ENCODE measurements at regions of chr6 and their contacts with region 1.

Region 1: GRCh38 chr6:85482905-85483700 is 33.2 kb downstream of the NT5E start:
- DNase-seq: peak; percentile 87
- H3K4me3 Mint-ChIP-seq: no peak overlapping the region
- H3K27ac Mint-ChIP-seq: no peak overlapping the region
- H3K4me1 Mint-ChIP-seq: peaks cover 20% of the 10 kb centered on the region
- H3K27me3 Mint-ChIP-seq: no peaks in the 10 kb centered on the region
- CTCF ChIP-seq: peak; percentile 94

Region 2: DNA sequence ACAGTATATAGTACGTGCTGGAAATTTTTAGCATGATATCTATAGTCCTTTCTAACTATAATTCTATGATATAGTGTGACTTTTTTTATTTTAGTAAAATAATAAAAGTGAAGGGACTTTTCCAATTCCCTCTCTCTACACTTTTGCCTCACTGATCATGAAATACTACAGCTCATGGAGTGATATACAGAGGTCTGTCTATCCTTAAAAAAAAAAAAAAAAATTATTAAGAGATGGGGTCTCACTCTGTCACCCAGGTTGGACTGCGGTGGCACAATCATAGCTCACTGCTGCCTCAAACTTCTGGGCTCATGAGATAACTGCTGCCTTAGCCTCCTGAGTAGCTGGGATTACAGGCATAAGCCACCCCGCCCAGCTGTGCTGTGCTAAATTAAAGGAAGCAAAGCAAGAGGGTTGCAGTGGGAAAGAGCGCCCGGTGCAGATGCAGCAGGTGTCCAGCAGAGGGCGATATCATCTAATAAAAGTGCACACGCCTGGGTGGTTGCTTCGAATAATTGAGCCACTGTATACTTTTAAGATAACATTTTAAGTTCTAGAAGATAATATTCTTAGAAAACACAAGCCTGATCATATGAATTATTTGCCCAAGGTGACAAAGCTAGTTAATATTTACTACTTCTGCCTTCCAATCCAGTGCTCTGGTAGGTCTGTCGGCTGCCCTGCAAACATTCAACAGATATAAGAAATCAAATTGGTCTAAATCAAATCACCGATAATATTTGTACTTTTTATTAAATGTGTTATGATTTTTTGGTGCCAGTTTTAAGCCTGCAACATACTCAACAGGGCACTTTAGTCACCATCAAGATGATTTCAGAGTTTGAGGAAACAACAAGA is 128.1 kb before region 1 on chr6:
- CTCF ChIA-PET with region 1: interaction called, 23 read pairs
- intact Hi-C with region 1: loop called (anchors 1 kb)
- DNase-seq: peak; percentile 79
- H3K4me3 Mint-ChIP-seq: no peak overlapping the region
- H3K27ac Mint-ChIP-seq: no peak overlapping the region
- H3K4me1 Mint-ChIP-seq: peaks cover 18% of the 10 kb centered on the region
- H3K27me3 Mint-ChIP-seq: no peaks in the 10 kb centered on the region
- CTCF ChIP-seq: peak; percentile 89

Region 3: DNA sequence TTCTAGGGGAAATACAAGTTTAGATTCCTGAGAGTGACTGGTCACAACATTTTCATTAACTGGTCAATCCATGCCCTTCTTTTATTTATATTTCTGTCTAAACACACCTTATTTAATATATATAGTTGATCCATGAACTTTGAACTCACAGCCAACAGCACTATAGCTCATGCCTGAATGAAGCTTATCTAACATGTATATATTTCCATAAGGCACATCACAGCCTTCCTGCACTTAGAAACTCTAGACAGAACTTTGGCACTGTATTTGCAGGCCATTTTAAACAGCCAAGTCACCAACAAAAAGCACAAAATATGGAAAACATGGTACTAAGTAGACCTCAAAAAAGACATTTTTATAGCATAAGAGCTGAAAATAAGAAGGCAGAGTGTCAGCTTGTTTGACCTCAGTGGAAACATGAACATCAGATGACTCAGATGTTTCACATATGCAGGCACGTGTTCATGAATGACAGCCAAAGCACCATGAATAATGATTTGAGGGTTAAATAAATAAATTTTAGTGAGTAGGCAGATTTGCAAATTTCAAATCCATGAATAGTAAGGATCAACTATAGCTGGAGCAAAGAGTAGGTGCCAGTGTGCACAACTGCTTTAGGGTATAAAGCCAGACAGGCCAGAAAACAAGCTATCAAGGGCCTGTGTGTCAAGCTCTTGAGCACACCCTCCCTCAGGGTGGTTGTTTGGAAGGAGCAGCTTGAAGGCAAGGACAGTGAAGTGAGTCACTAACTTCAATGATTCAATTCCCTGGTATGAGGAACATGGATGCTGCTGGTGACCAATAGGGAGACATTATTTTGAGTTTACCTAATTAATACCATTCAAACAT is 122.1 kb before region 1 on chr6:
- CTCF ChIA-PET with region 1: interaction called, 23 read pairs
- intact Hi-C with region 1: no loop called
- DNase-seq: peak; percentile 72
- H3K4me3 Mint-ChIP-seq: no peak overlapping the region
- H3K27ac Mint-ChIP-seq: peak overlapping the region; percentile 89
- H3K4me1 Mint-ChIP-seq: peaks cover 47% of the 10 kb centered on the region
- H3K27me3 Mint-ChIP-seq: no peaks in the 10 kb centered on the region
- CTCF ChIP-seq: no peak

Region 4: DNA sequence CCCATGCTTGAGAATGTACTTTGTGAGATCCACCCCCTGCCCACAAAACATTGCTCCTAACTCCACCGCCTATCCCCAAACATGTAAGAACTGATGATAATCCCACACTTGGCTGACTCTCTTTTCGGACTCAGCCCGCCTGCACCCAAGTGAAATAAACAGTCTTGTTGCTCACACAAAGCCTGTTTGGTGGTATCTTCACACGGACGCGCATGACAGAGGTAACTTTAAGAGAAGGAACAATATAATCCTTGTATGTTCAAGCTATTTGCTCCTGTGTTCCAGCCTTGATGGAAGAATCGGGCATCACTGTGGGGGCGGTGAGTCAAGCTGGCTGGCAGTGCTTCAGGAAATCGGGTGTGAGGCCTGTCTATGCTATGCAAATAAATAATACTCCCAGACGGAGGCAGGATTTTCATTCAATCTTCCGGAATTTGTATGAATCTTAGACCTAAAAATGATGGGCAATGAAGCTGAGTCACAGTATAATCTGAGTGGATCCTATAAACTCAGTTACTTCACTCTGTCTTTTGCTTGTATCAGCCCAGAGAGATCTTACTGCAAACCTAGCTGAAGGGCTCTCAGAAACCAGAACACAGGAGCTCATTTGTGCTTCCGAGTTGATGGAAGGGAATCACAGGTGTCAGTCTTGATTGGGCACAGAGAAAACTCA is 78.5 kb before region 1 on chr6:
- CTCF ChIA-PET with region 1: interaction called, 12 read pairs
- intact Hi-C with region 1: loop called (anchors 1 kb)
- DNase-seq: peak; percentile 75
- H3K4me3 Mint-ChIP-seq: peak overlapping the region; percentile 71
- H3K27ac Mint-ChIP-seq: peak overlapping the region; percentile 99
- H3K4me1 Mint-ChIP-seq: peaks cover 74% of the 10 kb centered on the region
- H3K27me3 Mint-ChIP-seq: no peaks in the 10 kb centered on the region
- CTCF ChIP-seq: no peak

Region 5: GRCh38 chr6:85449818-85450759 is 33.0 kb before region 1 on chr6 and contains the start of gene NT5E:
- CTCF ChIA-PET with region 1: interaction called, 4 read pairs
- intact Hi-C with region 1: loop called (anchors 2 kb)
- DNase-seq: peak; percentile 86
- H3K4me3 Mint-ChIP-seq: peak within 1 kb of the TSS; percentile 99
- H3K27ac Mint-ChIP-seq: peak within 1 kb of the TSS; percentile 89
- H3K4me1 Mint-ChIP-seq: peaks cover 65% of the 10 kb centered on the region
- H3K27me3 Mint-ChIP-seq: no peaks in the 10 kb centered on the region
- CTCF ChIP-seq: no peak
- total RNA-seq, gene NT5E: 52.8 and 76.5 TPM in 2 replicates

Region 6: DNA sequence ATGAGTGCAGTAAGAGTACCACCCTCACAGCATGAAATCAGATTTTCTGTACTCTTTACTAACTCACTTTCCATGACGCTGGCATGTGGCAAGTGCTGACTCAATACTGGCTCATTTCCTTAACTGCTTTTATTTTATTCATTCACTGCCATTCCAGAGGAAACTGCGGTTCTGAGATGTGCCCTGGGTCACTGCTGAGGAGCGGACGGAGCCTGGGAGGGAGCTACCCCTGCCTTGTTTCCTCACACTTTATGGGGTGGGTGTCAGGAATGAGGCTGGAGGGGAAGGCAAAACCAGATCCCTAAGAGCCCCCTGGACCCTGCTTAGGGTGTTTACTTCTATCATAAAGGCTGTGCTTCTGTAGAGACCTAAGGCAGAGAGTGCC is 18.9 kb before region 1 on chr6:
- CTCF ChIA-PET with region 1: interaction called, 12 read pairs
- intact Hi-C with region 1: no loop called
- DNase-seq: peak; percentile 67
- H3K4me3 Mint-ChIP-seq: peak overlapping the region; percentile 20
- H3K27ac Mint-ChIP-seq: peak overlapping the region; percentile 87
- H3K4me1 Mint-ChIP-seq: peaks cover 76% of the 10 kb centered on the region
- H3K27me3 Mint-ChIP-seq: no peaks in the 10 kb centered on the region
- CTCF ChIP-seq: no peak

Measured in Calu3 (cell line).